ENCODE measurements at regions of chr2 and their contacts with region 1.

Region 1: DNA sequence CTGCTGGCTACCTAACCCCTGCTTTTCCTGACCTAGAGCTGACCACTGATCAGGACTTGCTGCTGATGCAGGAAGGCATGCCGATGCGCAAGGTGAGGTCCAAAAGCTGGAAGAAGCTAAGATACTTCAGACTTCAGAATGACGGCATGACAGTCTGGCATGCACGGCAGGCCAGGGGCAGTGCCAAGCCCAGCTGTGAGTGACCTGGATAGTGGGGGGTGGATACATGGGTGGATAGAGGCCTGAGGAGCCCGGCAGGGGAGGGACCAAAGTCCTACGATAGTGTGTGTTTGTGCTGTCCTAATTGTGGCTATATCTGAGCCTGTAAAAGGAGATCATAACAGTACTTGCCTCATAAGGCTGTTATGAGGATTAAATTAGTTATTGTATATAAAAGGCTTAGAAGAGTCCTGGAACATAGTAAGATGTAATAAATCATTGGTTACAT is 8.2 kb downstream of the PLCD4 start:
- DNase-seq: no peak
- H3K4me3 ChIP-seq: no peak overlapping the region
- H3K27ac ChIP-seq: no peak overlapping the region
- H3K27me3 ChIP-seq: peaks cover 3% of the 10 kb centered on the region
- CTCF ChIP-seq: no peak

Region 2: GRCh38 chr2:218367415-218368153 is 248.3 kb before region 1 on chr2:
- CTCF ChIA-PET with region 1: no interaction called
- POLR2A ChIA-PET with region 1: no interaction called
- DNase-seq: no peak
- H3K4me3 ChIP-seq: peak overlapping the region; percentile 59
- H3K27ac ChIP-seq: no peak overlapping the region
- H3K27me3 ChIP-seq: peaks cover 4% of the 10 kb centered on the region
- CTCF ChIP-seq: no peak

Region 3: DNA sequence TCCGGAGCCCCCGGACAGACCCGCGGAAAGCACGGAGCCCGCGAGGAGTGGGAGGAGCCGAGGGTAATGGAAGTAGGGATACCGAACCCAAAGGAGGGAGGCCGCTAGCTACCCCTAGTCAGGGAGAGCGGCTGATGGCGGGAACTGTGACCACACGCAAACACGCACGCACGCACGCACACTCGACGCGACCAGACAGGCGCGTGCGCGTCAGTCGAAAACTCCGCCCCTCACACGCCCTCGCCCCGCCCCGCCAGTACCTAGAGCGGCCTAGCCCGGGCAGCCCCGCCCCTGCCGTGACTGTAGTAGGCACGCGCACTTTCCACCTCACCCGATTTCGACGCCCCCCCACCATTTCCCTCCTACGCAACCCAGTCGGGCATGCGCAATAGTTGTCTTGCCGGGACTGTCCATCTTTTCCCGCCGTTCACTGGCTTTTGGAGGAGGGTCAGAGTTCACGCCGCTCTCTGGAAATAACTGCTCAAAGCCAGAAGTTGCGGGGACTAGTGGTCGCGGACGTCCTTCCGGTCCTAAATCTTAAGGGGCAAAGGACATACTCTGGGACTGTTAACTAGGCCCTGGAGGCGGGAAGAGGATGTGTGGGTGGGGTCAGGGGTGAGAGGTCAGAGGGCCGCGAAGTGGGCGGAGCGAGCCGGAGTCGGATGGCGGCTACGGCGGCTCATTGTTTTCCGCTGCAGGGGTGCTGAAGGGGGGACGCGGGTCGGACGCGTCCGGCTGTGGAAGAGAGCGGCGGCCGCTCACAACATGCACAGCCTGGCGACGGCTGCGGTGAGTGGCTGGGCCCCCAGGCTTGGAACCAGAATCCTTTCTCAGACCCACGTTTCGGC is 47.5 kb before region 1 on chr2 and contains the starts of genes CNOT9 and USP37:
- CTCF ChIA-PET with region 1: no interaction called
- POLR2A ChIA-PET with region 1: interaction called, 15 read pairs
- DNase-seq: peak; percentile 95
- H3K4me3 ChIP-seq: peak within 1 kb of the TSS; percentile 92
- H3K27ac ChIP-seq: peak within 1 kb of the TSS; percentile 95
- H3K27me3 ChIP-seq: no peaks in the 10 kb centered on the region
- CTCF ChIP-seq: no peak
- polyA plus RNA-seq, gene CNOT9: 60.2 and 77.1 TPM in 2 replicates
- polyA plus RNA-seq, gene USP37: 2.8 and 4.9 TPM in 2 replicates

Measured in AG04450 (cell line).